Heart right ventricle (tissue), 16 donors: ENCODE measurements at regions of chr16 and their contacts with region 1.

Region 1: DNA sequence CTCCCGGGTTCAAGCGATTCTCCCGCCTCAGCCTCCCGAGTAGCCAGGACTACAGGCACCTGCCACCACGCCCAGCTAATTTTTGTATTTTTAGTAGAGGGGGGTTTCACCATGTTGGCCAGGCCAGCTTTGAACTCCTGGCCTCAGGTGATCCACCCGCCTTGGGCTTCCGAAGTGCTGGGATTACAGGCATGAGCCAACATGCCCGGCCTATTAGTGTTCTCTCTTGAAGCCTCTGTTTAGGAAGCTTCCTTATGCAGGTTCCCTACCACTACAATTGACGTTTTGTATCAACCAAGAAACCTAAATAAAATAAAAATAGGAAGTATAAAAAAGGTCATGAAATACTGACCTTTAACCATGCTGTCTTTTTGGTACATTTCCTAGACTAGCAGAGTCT is 16.0 kb downstream of the CHST5 start:
- DNase-seq: no peak
- ATAC-seq: no peak
- H3K4me3 ChIP-seq: no peak overlapping the region
- H3K27ac ChIP-seq: no peak overlapping the region
- H3K4me1 ChIP-seq: peaks cover 0 to 10% (median 7%) of the 10 kb centered on the region in 9 donors
- H3K27me3 ChIP-seq: no peaks in the 10 kb centered on the region
- CTCF ChIP-seq: no peak

Region 2: GRCh38 chr16:75087375-75087979 is 432.4 kb before region 1 on chr16:
- intact Hi-C with region 1: no loop called
- DNase-seq: peak; percentile 47 to 69
- ATAC-seq: peak; percentile 83 to 92 (median 88)
- H3K4me3 ChIP-seq: peak overlapping the region in 5 of 10 donors; percentile 2 to 28 (median 14)
- H3K27ac ChIP-seq: peak overlapping the region; percentile 21 to 83 (median 68)
- H3K4me1 ChIP-seq: peaks cover 16 to 59% (median 48%) of the 10 kb centered on the region in 9 donors
- H3K27me3 ChIP-seq: no peaks in the 10 kb centered on the region
- CTCF ChIP-seq: peak in 3 of 9 donors; percentile 17 to 23 (median 21)

Region 3: DNA sequence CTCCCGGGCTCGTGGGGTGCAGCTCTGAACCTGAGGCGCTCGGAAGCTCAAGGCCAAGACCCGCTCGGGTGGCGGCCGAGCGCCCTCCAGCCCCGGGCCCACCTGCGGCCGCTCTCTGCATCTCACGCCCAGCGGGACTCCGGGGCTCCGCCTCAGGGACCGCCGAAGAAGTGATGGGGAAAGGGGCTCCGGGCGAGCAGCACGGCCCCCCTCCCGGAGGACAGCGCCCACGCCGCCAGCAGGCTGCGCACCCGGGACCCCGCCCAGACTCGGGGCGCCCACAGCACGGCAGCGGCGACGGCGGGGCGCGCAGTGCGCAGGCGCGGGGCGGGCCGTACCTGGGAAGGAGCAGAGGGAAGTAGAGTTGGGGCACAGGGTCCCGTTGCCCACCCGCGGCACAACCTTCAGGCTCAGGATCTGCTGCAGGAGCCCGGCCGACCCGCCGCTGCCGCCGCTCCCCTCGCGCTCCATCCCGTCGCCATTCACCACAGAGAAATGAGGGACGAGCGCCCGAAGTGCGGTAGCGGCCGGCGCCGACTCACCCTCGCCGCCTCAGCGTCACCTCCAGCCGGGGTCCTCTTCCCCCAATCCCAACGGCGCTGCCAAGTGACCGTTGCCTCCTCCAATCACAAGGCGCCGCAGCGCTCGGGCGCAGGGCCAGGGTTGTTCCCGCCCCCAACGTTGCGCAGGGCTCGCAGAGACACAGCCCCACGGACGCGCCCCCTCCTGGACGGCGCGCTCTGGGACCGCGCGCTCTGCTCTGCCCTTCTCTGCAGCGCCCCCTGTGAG is 55.6 kb before region 1 on chr16 and contains the start of gene TMEM170A:
- intact Hi-C with region 1: loop called in 1 of 10 experiments (anchors 2 kb)
- DNase-seq: peak; percentile 100
- ATAC-seq: peak; percentile 97 to 99 (median 98)
- H3K4me3 ChIP-seq: peak within 1 kb of the TSS; percentile 51 to 100 (median 99)
- H3K27ac ChIP-seq: peak within 1 kb of the TSS; percentile 94 to 99 (median 97)
- H3K4me1 ChIP-seq: peaks cover 0 to 48% (median 19%) of the 10 kb centered on the region in 9 donors
- H3K27me3 ChIP-seq: no peaks in the 10 kb centered on the region
- CTCF ChIP-seq: peak; percentile 100
- total RNA-seq, gene TMEM170A: 7.2 to 12.5 (median 9.3) TPM

Region 4: GRCh38 chr16:75550211-75550662 is 30.4 kb after region 1 on chr16:
- intact Hi-C with region 1: loop called in 3 of 10 experiments (anchors 5 kb)
- DNase-seq: peak in 1 of 2 donors; percentile 82
- ATAC-seq: peak; percentile 67 to 90 (median 82)
- H3K4me3 ChIP-seq: peak overlapping the region in 5 of 10 donors; percentile 9 to 36 (median 15)
- H3K27ac ChIP-seq: peak overlapping the region; percentile 18 to 86 (median 77)
- H3K4me1 ChIP-seq: peaks cover 0 to 37% (median 10%) of the 10 kb centered on the region in 9 donors
- H3K27me3 ChIP-seq: no peaks in the 10 kb centered on the region
- CTCF ChIP-seq: peak in 7 of 9 donors; percentile 55 to 73 (median 66)

Region 5: GRCh38 chr16:75614066-75614897 is 94.4 kb after region 1 on chr16:
- intact Hi-C with region 1: loop called in 1 of 10 experiments (anchors 10 kb)
- DNase-seq: no peak
- ATAC-seq: no peak
- H3K4me3 ChIP-seq: no peak overlapping the region
- H3K27ac ChIP-seq: no peak overlapping the region
- H3K4me1 ChIP-seq: peaks cover 0 to 5% (median 0%) of the 10 kb centered on the region in 9 donors
- H3K27me3 ChIP-seq: no peaks in the 10 kb centered on the region
- CTCF ChIP-seq: no peak